Natural killer cell (primary cell): ENCODE measurements at regions of chr9 and their contacts with region 1.

Region 1: GRCh38 chr9:29322240-29322639 is 1749.0 kb upstream of the C9orf72 start:
- DNase-seq: peak in 1 of 2 donors; percentile 19
- ATAC-seq: peak; percentile 53 to 64 (median 58)
- H3K4me3 ChIP-seq: no peak overlapping the region
- H3K4me3 Mint-ChIP-seq: peak overlapping the region; percentile 46
- H3K27ac ChIP-seq: peak overlapping the region; percentile 78
- H3K27ac Mint-ChIP-seq: peak overlapping the region; percentile 86 to 92
- H3K4me1 ChIP-seq: peaks cover 19% of the 10 kb centered on the region
- H3K4me1 Mint-ChIP-seq: peaks cover 28 to 50% of the 10 kb centered on the region in 2 donors
- H3K27me3 ChIP-seq: no peaks in the 10 kb centered on the region
- H3K27me3 Mint-ChIP-seq: no peaks in the 10 kb centered on the region
- CTCF ChIP-seq: no peak

Region 2: GRCh38 chr9:27573634-27574590 is 1748.3 kb before region 1 on chr9:
- intact Hi-C with region 1: loop called (anchors 10 kb)
- DNase-seq: peak; percentile 90 to 100
- ATAC-seq: peak; percentile 83 to 90 (median 83)
- H3K4me3 ChIP-seq: peak overlapping the region; percentile 90
- H3K4me3 Mint-ChIP-seq: peak overlapping the region; percentile 100
- H3K27ac ChIP-seq: peak overlapping the region; percentile 99
- H3K27ac Mint-ChIP-seq: peak overlapping the region; percentile 97 to 99
- H3K4me1 ChIP-seq: peaks cover 7% of the 10 kb centered on the region
- H3K4me1 Mint-ChIP-seq: peaks cover 25 to 26% of the 10 kb centered on the region in 2 donors
- H3K27me3 ChIP-seq: no peaks in the 10 kb centered on the region
- H3K27me3 Mint-ChIP-seq: peaks cover 6 to 8% of the 10 kb centered on the region in 2 donors
- CTCF ChIP-seq: no peak

Region 3: GRCh38 chr9:28887188-28887884 is 434.9 kb before region 1 on chr9:
- intact Hi-C with region 1: no loop called
- DNase-seq: no peak
- ATAC-seq: no peak
- H3K4me3 ChIP-seq: no peak overlapping the region
- H3K4me3 Mint-ChIP-seq: no peak overlapping the region
- H3K27ac ChIP-seq: no peak overlapping the region
- H3K27ac Mint-ChIP-seq: no peak overlapping the region
- H3K4me1 ChIP-seq: no peaks in the 10 kb centered on the region
- H3K4me1 Mint-ChIP-seq: peaks cover 0 to 11% of the 10 kb centered on the region in 2 donors
- H3K27me3 ChIP-seq: no peaks in the 10 kb centered on the region
- H3K27me3 Mint-ChIP-seq: no peaks in the 10 kb centered on the region
- CTCF ChIP-seq: no peak

Region 4: GRCh38 chr9:29211580-29212396 is 110.5 kb before region 1 on chr9:
- intact Hi-C with region 1: loop called (anchors 2 kb)
- DNase-seq: peak; percentile 38 to 72
- ATAC-seq: peak; percentile 90 to 92 (median 90)
- H3K4me3 ChIP-seq: peak overlapping the region; percentile 48
- H3K4me3 Mint-ChIP-seq: peak overlapping the region; percentile 89
- H3K27ac ChIP-seq: no peak overlapping the region
- H3K27ac Mint-ChIP-seq: peak overlapping the region; percentile 39 to 90
- H3K4me1 ChIP-seq: peaks cover 28% of the 10 kb centered on the region
- H3K4me1 Mint-ChIP-seq: peaks cover 16 to 44% of the 10 kb centered on the region in 2 donors
- H3K27me3 ChIP-seq: peaks cover 9% of the 10 kb centered on the region
- H3K27me3 Mint-ChIP-seq: peaks cover 6 to 20% of the 10 kb centered on the region in 2 donors
- CTCF ChIP-seq: peak; percentile 73

Region 5: GRCh38 chr9:29285818-29286217 is 36.4 kb before region 1 on chr9:
- intact Hi-C with region 1: loop called (anchors 5 kb)
- DNase-seq: no peak
- ATAC-seq: no peak
- H3K4me3 ChIP-seq: no peak overlapping the region
- H3K4me3 Mint-ChIP-seq: no peak overlapping the region
- H3K27ac ChIP-seq: no peak overlapping the region
- H3K27ac Mint-ChIP-seq: peak overlapping the region; percentile 4 to 37
- H3K4me1 ChIP-seq: no peaks in the 10 kb centered on the region
- H3K4me1 Mint-ChIP-seq: peaks cover 13 to 23% of the 10 kb centered on the region in 2 donors
- H3K27me3 ChIP-seq: no peaks in the 10 kb centered on the region
- H3K27me3 Mint-ChIP-seq: no peaks in the 10 kb centered on the region
- CTCF ChIP-seq: no peak

Region 6: GRCh38 chr9:29297592-29297991 is 24.6 kb before region 1 on chr9:
- intact Hi-C with region 1: loop called (anchors 2 kb)
- DNase-seq: no peak
- ATAC-seq: peak; percentile 66 to 88 (median 72)
- H3K4me3 ChIP-seq: no peak overlapping the region
- H3K4me3 Mint-ChIP-seq: peak overlapping the region; percentile 57
- H3K27ac ChIP-seq: peak overlapping the region; percentile 25
- H3K27ac Mint-ChIP-seq: peak overlapping the region; percentile 73 to 87
- H3K4me1 ChIP-seq: peaks cover 2% of the 10 kb centered on the region
- H3K4me1 Mint-ChIP-seq: peaks cover 23 to 38% of the 10 kb centered on the region in 2 donors
- H3K27me3 ChIP-seq: no peaks in the 10 kb centered on the region
- H3K27me3 Mint-ChIP-seq: no peaks in the 10 kb centered on the region
- CTCF ChIP-seq: no peak

Region 7: DNA sequence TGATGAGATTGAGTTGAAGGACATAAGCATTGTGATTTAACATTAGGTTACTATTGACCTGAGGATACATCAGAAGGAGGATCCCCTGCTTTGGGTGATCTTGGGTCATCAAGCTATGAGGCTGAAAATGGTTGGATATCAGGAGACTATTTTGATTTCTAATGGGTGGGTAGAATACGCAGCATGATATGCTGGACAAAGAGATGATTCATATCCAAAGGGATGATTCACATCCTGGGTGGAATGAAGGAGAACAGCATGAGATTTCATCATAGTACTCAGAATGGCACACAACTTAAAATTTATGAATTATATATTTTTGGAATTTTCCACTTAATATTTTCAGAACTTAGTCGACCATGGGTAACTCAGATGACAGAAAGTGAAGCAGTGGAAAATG is 10.5 kb after region 1 on chr9:
- intact Hi-C with region 1: no loop called
- DNase-seq: no peak
- ATAC-seq: no peak
- H3K4me3 ChIP-seq: no peak overlapping the region
- H3K4me3 Mint-ChIP-seq: no peak overlapping the region
- H3K27ac ChIP-seq: no peak overlapping the region
- H3K27ac Mint-ChIP-seq: no peak overlapping the region
- H3K4me1 ChIP-seq: no peaks in the 10 kb centered on the region
- H3K4me1 Mint-ChIP-seq: peaks cover 0 to 4% of the 10 kb centered on the region in 2 donors
- H3K27me3 ChIP-seq: no peaks in the 10 kb centered on the region
- H3K27me3 Mint-ChIP-seq: no peaks in the 10 kb centered on the region
- CTCF ChIP-seq: no peak

Region 8: GRCh38 chr9:29648601-29649000 is 326.4 kb after region 1 on chr9:
- intact Hi-C with region 1: no loop called
- DNase-seq: no peak
- ATAC-seq: no peak
- H3K4me3 ChIP-seq: no peak overlapping the region
- H3K4me3 Mint-ChIP-seq: no peak overlapping the region
- H3K27ac ChIP-seq: no peak overlapping the region
- H3K27ac Mint-ChIP-seq: no peak overlapping the region
- H3K4me1 ChIP-seq: no peaks in the 10 kb centered on the region
- H3K4me1 Mint-ChIP-seq: no peaks in the 10 kb centered on the region
- H3K27me3 ChIP-seq: no peaks in the 10 kb centered on the region
- H3K27me3 Mint-ChIP-seq: no peaks in the 10 kb centered on the region
- CTCF ChIP-seq: no peak

Region 9: GRCh38 chr9:29740518-29740917 is 418.3 kb after region 1 on chr9:
- intact Hi-C with region 1: loop called (anchors 2 kb)
- DNase-seq: no peak
- ATAC-seq: peak; percentile 69 to 96 (median 89)
- H3K4me3 ChIP-seq: no peak overlapping the region
- H3K4me3 Mint-ChIP-seq: peak overlapping the region; percentile 13
- H3K27ac ChIP-seq: peak overlapping the region; percentile 43
- H3K27ac Mint-ChIP-seq: peak overlapping the region; percentile 50 to 82
- H3K4me1 ChIP-seq: no peaks in the 10 kb centered on the region
- H3K4me1 Mint-ChIP-seq: peaks cover 8 to 14% of the 10 kb centered on the region in 2 donors
- H3K27me3 ChIP-seq: no peaks in the 10 kb centered on the region
- H3K27me3 Mint-ChIP-seq: no peaks in the 10 kb centered on the region
- CTCF ChIP-seq: no peak